ENCODE measurements at regions of chr10 and their contacts with region 1.

Region 1: GRCh38 chr10:83871187-83872081 is 267.9 kb upstream of the GHITM start:
- DNase-seq: peak; percentile 69
- H3K4me3 ChIP-seq: no peak overlapping the region
- H3K27ac ChIP-seq: no peak overlapping the region
- H3K4me1 ChIP-seq: no peaks in the 10 kb centered on the region
- H3K27me3 ChIP-seq: no peaks in the 10 kb centered on the region
- CTCF ChIP-seq: peak; percentile 86 to 92
- POLR2A ChIP-seq: no peak

Region 2: DNA sequence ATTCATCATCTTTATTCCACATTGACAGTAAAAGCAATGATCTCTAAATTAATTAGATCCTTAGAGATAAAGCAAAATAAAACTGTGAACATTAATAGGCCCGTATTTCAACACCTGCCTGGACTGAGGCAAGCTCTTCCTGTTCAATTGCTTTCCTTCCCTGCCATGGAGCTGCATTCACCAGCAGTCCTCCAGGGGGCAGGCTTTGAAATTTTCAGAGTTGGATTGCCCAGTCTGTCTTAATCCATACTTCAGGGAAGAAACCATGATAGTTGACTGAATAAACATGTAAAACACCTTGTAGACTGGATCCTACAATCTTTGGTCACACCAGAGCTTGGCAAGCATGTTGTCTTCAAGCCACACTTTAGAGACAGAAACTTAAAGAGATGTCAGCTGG is 1059.8 kb before region 1 on chr10:
- CTCF ChIA-PET with region 1: interaction called, 88 read pairs
- POLR2A ChIA-PET with region 1: no interaction called
- dilution Hi-C with region 1: no loop called
- intact Hi-C with region 1: loop called (anchors 1 kb)
- DNase-seq: peak; percentile 21
- H3K4me3 ChIP-seq: no peak overlapping the region
- H3K27ac ChIP-seq: no peak overlapping the region
- H3K4me1 ChIP-seq: no peaks in the 10 kb centered on the region
- H3K27me3 ChIP-seq: no peaks in the 10 kb centered on the region
- CTCF ChIP-seq: peak; percentile 52 to 60
- POLR2A ChIP-seq: no peak

Region 3: GRCh38 chr10:82969405-82969804 is 902.0 kb before region 1 on chr10:
- CTCF ChIA-PET with region 1: interaction called, 46 read pairs
- POLR2A ChIA-PET with region 1: no interaction called
- dilution Hi-C with region 1: no loop called
- intact Hi-C with region 1: no loop called
- DNase-seq: peak; percentile 29
- H3K4me3 ChIP-seq: no peak overlapping the region
- H3K27ac ChIP-seq: no peak overlapping the region
- H3K4me1 ChIP-seq: no peaks in the 10 kb centered on the region
- H3K27me3 ChIP-seq: no peaks in the 10 kb centered on the region
- CTCF ChIP-seq: peak in 1 of 2 donors; percentile 22
- POLR2A ChIP-seq: no peak

Region 4: DNA sequence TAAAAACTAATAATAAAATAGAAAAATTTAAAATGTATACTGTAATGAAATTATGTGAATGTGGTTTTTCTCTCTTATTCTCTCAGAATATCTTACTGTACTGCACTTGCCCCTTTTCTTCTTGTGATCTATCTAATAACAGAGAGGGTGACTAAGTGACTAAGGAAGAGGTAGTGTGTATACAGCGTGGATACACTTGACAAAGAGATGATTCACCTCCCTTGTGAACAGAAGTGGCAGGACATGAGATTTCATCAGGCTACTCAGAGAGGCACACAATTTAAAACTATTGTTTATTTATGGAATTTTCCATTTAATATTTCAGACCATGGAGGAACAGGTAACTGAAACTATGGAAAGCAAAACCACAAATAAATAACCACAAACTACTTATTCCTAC is 538.7 kb before region 1 on chr10:
- CTCF ChIA-PET with region 1: interaction called, 10 read pairs
- POLR2A ChIA-PET with region 1: no interaction called
- dilution Hi-C with region 1: no loop called
- intact Hi-C with region 1: no loop called
- DNase-seq: no peak
- H3K4me3 ChIP-seq: no peak overlapping the region
- H3K27ac ChIP-seq: no peak overlapping the region
- H3K4me1 ChIP-seq: no peaks in the 10 kb centered on the region
- H3K27me3 ChIP-seq: no peaks in the 10 kb centered on the region
- CTCF ChIP-seq: no peak
- POLR2A ChIP-seq: no peak

Region 5: GRCh38 chr10:83425313-83425712 is 446.1 kb before region 1 on chr10:
- CTCF ChIA-PET with region 1: interaction called, 15 read pairs
- POLR2A ChIA-PET with region 1: no interaction called
- dilution Hi-C with region 1: no loop called
- intact Hi-C with region 1: loop called (anchors 1 kb)
- DNase-seq: no peak
- H3K4me3 ChIP-seq: no peak overlapping the region
- H3K27ac ChIP-seq: no peak overlapping the region
- H3K4me1 ChIP-seq: no peaks in the 10 kb centered on the region
- H3K27me3 ChIP-seq: no peaks in the 10 kb centered on the region
- CTCF ChIP-seq: no peak
- POLR2A ChIP-seq: no peak

Region 6: GRCh38 chr10:83886871-83887270 is 15.4 kb after region 1 on chr10:
- CTCF ChIA-PET with region 1: interaction called, 14 read pairs
- POLR2A ChIA-PET with region 1: no interaction called
- dilution Hi-C with region 1: no loop called
- intact Hi-C with region 1: no loop called
- DNase-seq: no peak
- H3K4me3 ChIP-seq: no peak overlapping the region
- H3K27ac ChIP-seq: no peak overlapping the region
- H3K4me1 ChIP-seq: no peaks in the 10 kb centered on the region
- H3K27me3 ChIP-seq: peaks cover 0 to 3% of the 10 kb centered on the region in 2 experiments
- CTCF ChIP-seq: no peak
- POLR2A ChIP-seq: no peak

Region 7: DNA sequence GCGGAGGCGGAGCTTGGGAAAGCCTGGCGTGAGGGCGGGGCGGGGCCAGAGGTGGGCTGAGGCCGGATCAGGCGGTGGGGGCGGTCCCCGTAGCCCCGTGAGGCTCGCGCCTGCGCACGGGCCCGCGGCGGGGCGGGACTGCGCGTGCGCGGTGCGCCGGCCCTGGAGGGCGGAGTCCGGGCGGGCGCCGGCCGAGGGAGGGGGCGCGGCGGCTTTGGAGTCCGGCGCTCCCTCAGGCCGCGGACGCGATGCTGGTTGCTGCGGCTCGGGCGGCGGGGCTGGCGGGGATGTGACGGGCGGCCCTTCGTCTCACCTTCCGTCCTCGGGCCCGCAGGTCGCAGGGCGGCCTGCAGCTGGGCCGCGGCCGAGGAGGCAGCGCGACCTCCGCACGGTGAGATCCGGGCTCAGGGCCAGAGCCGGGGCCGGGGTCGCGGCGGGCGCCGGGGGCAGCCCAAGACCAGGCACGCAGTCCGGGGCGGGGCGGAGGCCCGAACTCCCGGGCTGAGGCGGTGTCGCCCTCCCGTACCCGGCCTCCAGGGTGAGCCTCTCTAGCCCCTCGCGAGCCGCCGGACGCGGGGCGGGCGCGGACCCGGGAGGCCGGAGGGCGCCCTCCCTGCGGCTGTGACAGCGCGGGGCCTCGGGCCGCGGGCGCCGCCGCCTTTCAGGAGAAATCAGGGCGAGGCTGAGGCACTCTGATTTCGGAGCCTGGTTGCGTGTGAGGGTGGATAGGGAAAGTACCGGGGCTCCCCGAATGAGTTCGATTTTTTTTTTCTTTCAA is 457.2 kb after region 1 on chr10 and contains the start of gene CCSER2:
- CTCF ChIA-PET with region 1: no interaction called
- POLR2A ChIA-PET with region 1: no interaction called
- dilution Hi-C with region 1: no loop called
- intact Hi-C with region 1: no loop called
- DNase-seq: peak; percentile 92
- H3K4me3 ChIP-seq: peak within 1 kb of the TSS; percentile 52 to 90 (median 70)
- H3K27ac ChIP-seq: peak within 1 kb of the TSS; percentile 86
- H3K4me1 ChIP-seq: peaks cover 7% of the 10 kb centered on the region
- H3K27me3 ChIP-seq: no peaks in the 10 kb centered on the region
- CTCF ChIP-seq: peak in 1 of 2 donors; percentile 17
- POLR2A ChIP-seq: peak; percentile 74
- total RNA-seq, gene CCSER2: 49.3 and 50.8 TPM in 2 replicates